Activated CD8-positive, alpha-beta T cell treated with anti-CD3 and anti-CD28 coated beads for 36 hours (primary cell): ENCODE measurements at regions of chr4 and their contacts with region 1.

Region 1: GRCh38 chr4:101205916-101206315 is 141.4 kb downstream of the PPP3CA start:
- DNase-seq: peak; percentile 69
- ATAC-seq: peak; percentile 99
- H3K4me3 Mint-ChIP-seq: peak overlapping the region; percentile 1
- H3K27ac Mint-ChIP-seq: peak overlapping the region; percentile 78
- H3K4me1 Mint-ChIP-seq: peaks cover 36% of the 10 kb centered on the region
- H3K27me3 Mint-ChIP-seq: no peaks in the 10 kb centered on the region
- CTCF ChIP-seq: no peak

Region 2: GRCh38 chr4:101050088-101050836 is 155.7 kb before region 1 on chr4:
- CTCF ChIA-PET with region 1: no interaction called
- POLR2A ChIA-PET with region 1: no interaction called
- intact Hi-C with region 1: no loop called
- DNase-seq: peak; percentile 13
- ATAC-seq: peak; percentile 65
- H3K4me3 Mint-ChIP-seq: no peak overlapping the region
- H3K27ac Mint-ChIP-seq: no peak overlapping the region
- H3K4me1 Mint-ChIP-seq: peaks cover 6% of the 10 kb centered on the region
- H3K27me3 Mint-ChIP-seq: no peaks in the 10 kb centered on the region
- CTCF ChIP-seq: no peak

Region 3: GRCh38 chr4:101187841-101188240 is 18.1 kb before region 1 on chr4:
- CTCF ChIA-PET with region 1: no interaction called
- POLR2A ChIA-PET with region 1: no interaction called
- intact Hi-C with region 1: no loop called
- DNase-seq: no peak
- ATAC-seq: peak; percentile 55
- H3K4me3 Mint-ChIP-seq: no peak overlapping the region
- H3K27ac Mint-ChIP-seq: no peak overlapping the region
- H3K4me1 Mint-ChIP-seq: peaks cover 21% of the 10 kb centered on the region
- H3K27me3 Mint-ChIP-seq: no peaks in the 10 kb centered on the region
- CTCF ChIP-seq: peak; percentile 57

Region 4: GRCh38 chr4:101321481-101322042 is 115.6 kb after region 1 on chr4:
- CTCF ChIA-PET with region 1: no interaction called
- POLR2A ChIA-PET with region 1: no interaction called
- intact Hi-C with region 1: no loop called
- DNase-seq: no peak
- ATAC-seq: no peak
- H3K4me3 Mint-ChIP-seq: no peak overlapping the region
- H3K27ac Mint-ChIP-seq: no peak overlapping the region
- H3K4me1 Mint-ChIP-seq: peaks cover 13% of the 10 kb centered on the region
- H3K27me3 Mint-ChIP-seq: peaks cover 2% of the 10 kb centered on the region
- CTCF ChIP-seq: no peak

Region 5: DNA sequence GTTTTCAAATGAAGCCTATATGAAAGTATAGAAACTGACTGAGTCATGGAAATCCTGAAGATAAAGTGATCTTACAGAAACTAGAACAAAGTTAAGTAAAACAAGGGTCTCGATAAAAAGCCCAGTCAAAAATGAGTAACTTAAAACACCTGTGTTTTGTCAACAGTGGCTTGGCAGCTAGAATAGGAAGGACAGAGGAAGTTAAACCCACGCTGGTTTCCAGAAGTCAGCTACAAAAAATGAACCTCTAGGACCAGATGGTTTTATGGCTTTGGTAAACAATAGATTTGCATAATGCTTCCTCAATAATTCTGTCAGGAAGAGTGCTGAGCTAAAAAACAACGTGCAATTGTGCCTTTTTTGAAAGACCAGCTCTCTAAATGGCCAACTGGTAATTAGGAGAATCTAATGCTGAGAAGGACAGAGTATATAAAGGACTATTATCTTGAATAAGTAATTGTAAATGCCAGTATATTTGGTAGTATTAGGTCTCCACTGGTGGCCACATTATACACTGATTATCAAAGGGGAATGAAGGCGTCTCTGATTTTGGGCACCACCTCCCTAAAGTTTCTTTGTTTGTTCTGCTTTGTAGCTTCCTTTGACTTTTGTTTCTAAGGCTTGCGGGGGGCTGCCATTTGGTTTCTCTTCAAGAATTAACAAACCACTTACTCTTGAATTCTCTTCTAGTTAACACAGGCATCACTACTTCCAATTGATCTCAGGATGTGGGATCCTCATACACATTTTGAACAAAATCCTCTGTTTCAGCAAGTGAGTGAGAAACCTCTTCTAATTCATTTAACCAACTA is 213.6 kb after region 1 on chr4:
- CTCF ChIA-PET with region 1: no interaction called
- POLR2A ChIA-PET with region 1: no interaction called
- intact Hi-C with region 1: loop called (anchors 2 kb)
- DNase-seq: peak; percentile 40
- ATAC-seq: peak; percentile 35
- H3K4me3 Mint-ChIP-seq: no peak overlapping the region
- H3K27ac Mint-ChIP-seq: peak overlapping the region; percentile 46
- H3K4me1 Mint-ChIP-seq: peaks cover 42% of the 10 kb centered on the region
- H3K27me3 Mint-ChIP-seq: peaks cover 24% of the 10 kb centered on the region
- CTCF ChIP-seq: no peak